ENCODE measurements at regions of chr11 and their contacts with region 1.

Region 1: DNA sequence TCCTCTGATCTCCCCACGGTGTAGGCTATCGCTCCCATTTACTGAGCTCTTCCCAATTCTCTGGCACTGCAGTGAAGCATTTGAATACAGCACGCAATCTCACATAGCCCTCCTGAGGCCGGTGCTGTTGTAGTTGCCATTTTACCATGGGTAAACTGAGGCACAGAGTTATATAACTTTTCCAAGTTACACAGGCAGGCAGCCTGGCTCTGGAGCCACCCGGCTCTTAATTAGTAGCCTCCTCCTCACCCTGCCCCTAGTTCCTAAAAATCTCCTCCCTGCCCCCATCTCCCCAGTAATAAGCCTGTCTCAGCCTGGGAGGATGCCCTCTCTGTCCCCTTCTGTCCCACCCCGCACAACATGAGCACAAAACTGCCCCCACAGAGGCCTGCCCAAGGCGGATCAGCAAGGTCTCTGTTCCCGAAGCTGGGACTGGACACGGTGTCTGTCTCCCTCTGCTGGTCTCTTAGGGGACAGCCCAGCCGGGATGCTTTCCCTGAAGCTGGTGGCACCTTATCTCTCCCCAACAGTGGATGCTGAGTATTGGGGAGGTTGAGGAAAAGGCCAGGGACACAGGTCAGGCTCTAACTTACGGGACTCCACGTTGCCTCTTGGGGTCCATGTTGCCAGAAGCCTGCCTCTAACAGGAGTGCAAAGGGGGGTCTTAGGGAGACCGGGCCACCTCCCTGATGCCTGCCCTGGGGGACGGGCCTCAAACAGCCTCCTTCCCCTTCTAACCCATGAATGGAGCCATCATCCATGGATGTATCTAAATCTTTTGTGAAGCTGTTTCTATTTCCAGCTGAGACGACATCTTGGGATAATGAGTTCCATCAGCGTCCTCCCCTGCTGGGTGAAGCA is 9.1 kb upstream of the CLCF1 start:
- DNase-seq: no peak
- H3K4me3 ChIP-seq: no peak overlapping the region
- H3K27me3 ChIP-seq: no peaks in the 10 kb centered on the region; the same call in 1 of the 2 replicates
- CTCF ChIP-seq: peak; percentile 99

Region 2: DNA sequence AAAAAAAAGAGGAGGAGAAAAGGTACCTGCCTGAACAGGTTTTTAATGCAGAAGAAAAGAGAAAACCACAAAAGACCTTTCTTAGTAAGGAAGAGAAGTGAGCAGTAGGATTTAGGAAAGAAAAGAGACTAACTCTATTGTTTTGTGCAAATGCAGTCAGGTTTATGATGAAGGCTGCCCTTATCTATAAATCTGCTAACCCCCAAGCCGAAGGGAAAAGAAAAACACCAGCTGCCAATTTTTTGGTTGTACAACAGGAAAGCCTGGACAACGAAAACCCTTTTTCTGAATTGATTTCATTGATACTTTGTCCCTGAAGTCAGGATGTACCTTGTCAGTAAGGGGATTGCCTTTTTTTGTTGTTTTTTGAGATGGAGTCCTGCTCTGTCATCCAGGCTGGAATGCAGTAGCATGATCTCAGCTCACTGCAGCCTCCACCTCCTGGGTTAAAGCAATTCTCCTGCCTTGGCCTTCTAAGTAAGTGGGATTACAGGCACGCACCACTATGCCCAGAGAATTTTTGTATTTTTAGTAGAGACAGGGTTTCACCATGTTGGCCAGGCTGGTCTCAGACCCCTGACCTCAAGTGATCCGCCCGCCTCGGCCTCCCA is 50.3 kb before region 1 on chr11:
- CTCF ChIA-PET with region 1: interaction called, 10 read pairs
- POLR2A ChIA-PET with region 1: no interaction called
- DNase-seq: no peak
- H3K4me3 ChIP-seq: no peak overlapping the region
- H3K27me3 ChIP-seq: no peaks in the 10 kb centered on the region
- CTCF ChIP-seq: no peak

Region 3: DNA sequence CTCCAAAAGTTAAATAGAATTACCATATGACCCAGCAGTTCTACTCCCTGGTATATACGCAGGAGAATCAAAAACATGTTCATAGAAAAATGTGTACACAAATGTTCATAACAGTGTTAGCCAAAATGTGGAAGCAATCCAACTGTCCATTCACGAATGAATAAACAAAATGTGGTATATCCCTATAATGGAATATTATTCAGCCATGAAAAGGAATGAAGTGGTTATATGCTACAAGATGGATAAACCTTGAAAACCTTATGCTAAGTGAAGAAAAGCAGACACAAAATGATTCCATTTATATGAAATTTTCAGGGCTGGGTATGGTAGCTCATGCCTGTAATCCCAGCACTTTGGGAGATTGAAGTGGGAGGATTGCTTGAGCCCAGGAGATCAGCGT is 45.2 kb before region 1 on chr11:
- CTCF ChIA-PET with region 1: interaction called, 10 read pairs
- POLR2A ChIA-PET with region 1: no interaction called
- DNase-seq: no peak
- H3K4me3 ChIP-seq: no peak overlapping the region
- H3K27me3 ChIP-seq: no peaks in the 10 kb centered on the region
- CTCF ChIP-seq: no peak

Region 4: GRCh38 chr11:67345920-67346799 is 36.3 kb before region 1 on chr11:
- CTCF ChIA-PET with region 1: interaction called, 892 read pairs
- POLR2A ChIA-PET with region 1: no interaction called
- DNase-seq: no peak
- H3K4me3 ChIP-seq: no peak overlapping the region
- H3K27me3 ChIP-seq: no peaks in the 10 kb centered on the region
- CTCF ChIP-seq: peak; percentile 81

Measured in BJ (cell line).